Ovary (tissue), 10 donors: ENCODE measurements at regions of chr9 and their contacts with region 1.

Region 1: DNA sequence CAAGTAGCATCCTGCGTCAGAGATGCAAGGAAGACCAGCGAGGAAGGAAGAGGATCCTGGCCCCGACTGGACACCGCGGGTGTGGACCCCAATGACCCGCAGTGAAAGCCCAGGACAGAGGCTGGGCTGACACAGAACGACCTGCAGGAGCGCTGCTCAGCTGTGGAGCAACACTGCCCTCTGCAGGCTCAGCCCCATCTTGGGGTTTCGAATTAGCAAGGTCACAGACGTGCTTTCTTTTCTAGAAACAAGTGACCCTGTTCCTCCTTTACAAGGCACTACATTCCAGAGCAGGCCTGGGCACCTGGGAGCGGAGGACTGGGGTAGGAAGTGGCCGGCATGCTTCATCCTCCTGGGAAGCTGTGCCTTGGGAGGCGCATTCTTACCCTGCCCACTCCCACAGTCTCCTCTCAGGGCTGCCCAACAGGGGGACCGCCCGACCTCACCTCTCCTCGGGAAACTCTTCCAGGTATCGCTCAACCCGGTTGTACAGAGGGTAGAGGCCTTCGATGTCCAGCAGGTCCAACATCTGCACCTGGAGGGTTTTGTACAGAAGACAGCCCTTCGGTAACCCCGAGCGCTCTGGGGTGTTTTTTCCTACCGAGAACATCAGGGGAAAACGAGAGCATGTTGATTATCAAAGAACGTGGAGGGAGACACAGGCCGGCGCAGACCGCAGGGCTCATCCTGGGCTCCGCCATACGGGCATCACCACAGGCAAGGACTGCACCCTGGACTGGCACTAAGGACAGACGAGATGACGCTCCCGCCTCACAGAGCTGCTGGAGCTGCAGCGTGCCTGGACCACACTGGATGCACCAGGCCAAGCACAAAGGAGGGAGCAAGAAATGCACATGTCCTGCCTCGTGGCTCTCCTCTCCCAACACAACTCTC is 35.0 kb downstream of the IPPK start:
- DNase-seq: peak; percentile 84 to 93 (median 92)
- H3K4me3 ChIP-seq: no peak overlapping the region
- H3K27ac ChIP-seq: peak overlapping the region; percentile 16 to 33
- H3K4me1 ChIP-seq: peaks cover 5% of the 10 kb centered on the region
- H3K27me3 ChIP-seq: no peaks in the 10 kb centered on the region
- CTCF ChIP-seq: peak; percentile 95 to 98 (median 98)
- EP300 ChIP-seq: no peak
- POLR2A ChIP-seq: peak; percentile 21

Region 2: DNA sequence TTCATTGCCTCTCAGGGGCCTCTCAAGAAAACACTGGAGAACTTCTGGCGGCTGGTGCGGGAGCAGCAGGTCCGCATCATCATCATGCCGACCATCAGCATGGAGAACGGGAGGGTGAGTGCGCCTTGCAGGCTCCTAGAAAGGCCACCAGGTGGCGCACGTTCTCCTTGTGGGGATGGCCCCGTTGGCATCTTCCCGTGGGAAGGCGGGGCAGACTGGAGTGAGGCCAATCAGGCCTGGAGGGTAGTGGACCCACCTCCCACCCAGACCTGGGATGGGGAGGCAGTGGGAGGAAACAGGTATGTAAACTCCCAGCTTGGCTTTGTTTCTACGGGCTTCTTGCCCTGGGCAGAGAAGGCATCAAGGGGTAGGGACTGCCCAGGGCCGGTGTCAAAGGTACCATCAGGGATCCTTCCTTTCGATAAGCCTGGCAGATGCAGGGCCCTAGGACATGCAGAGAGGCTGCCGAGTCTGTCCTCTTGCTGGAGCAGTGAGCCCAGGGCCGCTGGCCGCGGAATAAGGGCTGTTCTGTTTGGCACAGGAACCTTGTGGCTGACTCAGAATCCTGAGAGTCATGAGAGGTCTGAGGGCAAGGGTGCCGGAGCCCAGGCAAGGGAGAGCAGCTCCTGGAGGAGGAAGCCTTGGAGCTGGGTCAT is 500.9 kb before region 1 on chr9:
- intact Hi-C with region 1: loop called in 2 of 4 experiments (anchors 5 to 10 kb)
- DNase-seq: peak; percentile 78 to 92 (median 87)
- H3K4me3 ChIP-seq: peak overlapping the region; percentile 8
- H3K27ac ChIP-seq: peak overlapping the region; percentile 30 to 36
- H3K4me1 ChIP-seq: peaks cover 8% of the 10 kb centered on the region
- H3K27me3 ChIP-seq: no peaks in the 10 kb centered on the region
- CTCF ChIP-seq: peak; percentile 72 to 88 (median 83)
- EP300 ChIP-seq: no peak
- POLR2A ChIP-seq: no peak

Region 3: GRCh38 chr9:92342825-92343488 is 292.0 kb before region 1 on chr9:
- intact Hi-C with region 1: loop called (anchors 5 kb)
- DNase-seq: no peak
- H3K4me3 ChIP-seq: no peak overlapping the region
- H3K27ac ChIP-seq: no peak overlapping the region
- H3K4me1 ChIP-seq: no peaks in the 10 kb centered on the region
- H3K27me3 ChIP-seq: no peaks in the 10 kb centered on the region
- CTCF ChIP-seq: peak in 2 of 3 donors; percentile 22 to 50
- EP300 ChIP-seq: no peak
- POLR2A ChIP-seq: no peak

Region 4: DNA sequence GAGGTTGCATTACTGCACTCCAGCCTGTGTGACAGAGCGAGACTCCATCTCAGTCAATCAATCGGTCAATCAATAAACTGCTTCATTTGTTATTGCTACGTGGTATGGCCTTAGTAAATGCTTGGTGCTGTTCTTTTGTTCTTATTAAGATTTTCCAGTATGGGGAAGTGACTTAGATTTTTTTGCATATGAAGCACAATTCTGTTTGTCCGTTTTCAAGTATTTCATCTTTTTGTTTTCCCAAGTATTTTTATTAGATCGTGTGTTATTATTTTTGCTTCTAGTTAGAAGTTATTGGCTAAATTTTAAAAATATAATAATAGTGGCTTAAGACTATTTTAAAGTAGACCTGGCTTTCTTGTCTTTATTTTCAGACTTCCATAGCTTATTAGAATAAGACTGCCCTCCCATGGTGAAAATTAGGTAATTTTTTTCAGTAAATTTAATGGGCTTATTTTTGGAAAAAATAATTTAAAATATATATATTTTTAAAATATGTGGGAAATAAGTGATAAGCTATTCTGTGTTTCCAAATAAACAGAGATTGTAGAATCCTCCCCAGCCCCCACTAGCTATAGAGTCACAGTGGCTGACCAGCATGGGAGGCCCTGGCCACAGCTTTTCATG is 195.9 kb before region 1 on chr9:
- intact Hi-C with region 1: loop called (anchors 5 to 10 kb)
- DNase-seq: no peak
- H3K4me3 ChIP-seq: no peak overlapping the region
- H3K27ac ChIP-seq: no peak overlapping the region
- H3K4me1 ChIP-seq: peaks cover 2% of the 10 kb centered on the region
- H3K27me3 ChIP-seq: no peaks in the 10 kb centered on the region
- CTCF ChIP-seq: no peak
- EP300 ChIP-seq: no peak
- POLR2A ChIP-seq: no peak

Region 5: GRCh38 chr9:94166237-94166963 is 1531.4 kb after region 1 on chr9:
- intact Hi-C with region 1: no loop called
- DNase-seq: peak; percentile 98 to 99 (median 98)
- H3K4me3 ChIP-seq: peak overlapping the region; percentile 99
- H3K27ac ChIP-seq: peak overlapping the region; percentile 100
- H3K4me1 ChIP-seq: peaks cover 6% of the 10 kb centered on the region
- H3K27me3 ChIP-seq: no peaks in the 10 kb centered on the region
- CTCF ChIP-seq: peak in 2 of 3 donors; percentile 50 to 81
- EP300 ChIP-seq: peak; percentile 75
- POLR2A ChIP-seq: peak; percentile 99